ENCODE measurements at regions of chr12 and their contacts with region 1.

Region 1: DNA sequence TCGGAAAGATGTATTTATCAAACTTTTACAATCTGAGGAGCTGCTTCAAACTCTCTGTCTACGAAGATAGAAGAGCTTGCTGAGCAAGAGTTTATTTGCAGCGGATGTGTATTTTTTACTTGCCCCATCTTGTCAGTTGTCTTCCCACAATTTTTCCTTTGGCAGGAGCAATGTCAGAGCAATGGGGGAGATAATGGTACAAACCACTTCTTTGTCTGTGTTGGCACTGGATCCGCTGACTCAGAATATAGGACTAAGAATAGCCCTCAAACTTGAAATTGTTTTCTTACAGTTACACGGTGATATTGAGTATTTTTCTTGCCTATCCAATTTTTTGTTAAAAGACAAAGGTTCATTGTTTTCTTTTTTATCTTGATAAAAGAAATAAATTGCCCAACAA is 27.6 kb downstream of the HELB start:
- DNase-seq: no peak
- H3K4me3 ChIP-seq: no peak overlapping the region
- H3K27ac ChIP-seq: no peak overlapping the region
- H3K4me1 ChIP-seq: no peaks in the 10 kb centered on the region
- H3K27me3 ChIP-seq: no peaks in the 10 kb centered on the region
- CTCF ChIP-seq: no peak
- EP300 ChIP-seq: no peak
- POLR2A ChIP-seq: no peak

Region 2: DNA sequence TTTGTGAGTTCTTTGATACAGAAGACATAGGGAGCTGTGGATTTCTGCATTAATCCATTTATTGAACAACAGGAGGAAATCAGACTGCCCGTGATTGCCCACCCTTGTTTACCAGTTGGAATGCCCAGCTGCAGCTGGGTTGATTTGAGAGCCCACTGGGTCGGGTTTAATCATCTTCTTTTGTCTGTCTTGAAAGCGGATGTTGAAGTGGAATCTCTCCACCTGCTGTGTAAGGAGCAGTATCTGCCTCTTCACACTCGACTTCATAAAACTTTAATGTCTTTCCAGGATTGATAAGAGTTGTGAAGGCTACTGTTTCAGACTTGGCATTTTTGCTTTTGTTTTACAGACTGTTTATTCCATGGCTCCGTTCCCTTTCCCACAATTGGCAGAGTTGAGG is 1465.6 kb before region 1 on chr12:
- in situ Hi-C with region 1: no loop called
- intact Hi-C with region 1: loop called (anchors 5 kb)
- DNase-seq: no peak
- H3K4me3 ChIP-seq: no peak overlapping the region
- H3K27ac ChIP-seq: no peak overlapping the region
- H3K4me1 ChIP-seq: no peaks in the 10 kb centered on the region
- H3K27me3 ChIP-seq: no peaks in the 10 kb centered on the region
- CTCF ChIP-seq: no peak
- EP300 ChIP-seq: no peak
- POLR2A ChIP-seq: no peak

Region 3: DNA sequence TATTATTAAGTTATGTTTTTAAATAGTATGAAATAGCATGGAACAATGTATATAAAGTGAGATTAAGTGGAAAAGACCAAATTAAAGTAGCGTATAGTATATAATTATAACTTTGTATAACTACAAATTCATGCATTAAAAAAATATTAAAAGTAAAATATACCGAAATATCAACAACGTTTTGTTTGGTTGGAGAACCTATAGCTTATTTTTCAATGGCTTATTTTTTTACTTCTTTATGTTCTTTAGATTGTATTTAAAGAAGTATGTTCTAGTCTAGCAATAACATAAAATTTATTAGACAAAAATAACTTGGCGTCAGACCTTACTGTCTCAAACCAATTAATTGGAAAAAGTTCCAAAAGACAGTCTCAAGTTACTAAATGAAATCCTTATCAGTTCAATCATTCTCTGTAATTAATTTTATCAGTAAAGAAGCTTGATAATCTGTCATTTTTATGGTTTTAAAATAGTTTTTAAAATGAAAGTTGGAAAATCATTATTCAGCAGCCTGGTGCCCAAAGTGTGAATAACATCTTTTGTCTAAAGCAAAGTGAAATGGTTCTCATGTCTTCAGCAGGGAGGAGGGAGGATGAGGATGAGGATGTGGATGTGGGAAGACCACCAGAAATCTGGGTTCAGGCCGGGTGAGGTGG is 94.2 kb before region 1 on chr12:
- in situ Hi-C with region 1: no loop called
- intact Hi-C with region 1: no loop called
- DNase-seq: no peak
- H3K4me3 ChIP-seq: peak overlapping the region in 3 of 4 donors; percentile 48 to 60 (median 49)
- H3K27ac ChIP-seq: peak overlapping the region; percentile 53 to 69 (median 64)
- H3K4me1 ChIP-seq: peaks cover 0 to 7% (median 2%) of the 10 kb centered on the region in 4 donors
- H3K27me3 ChIP-seq: no peaks in the 10 kb centered on the region
- CTCF ChIP-seq: peak in 3 of 5 experiments; percentile 2 to 41 (median 11)
- EP300 ChIP-seq: no peak
- POLR2A ChIP-seq: no peak

Region 4: GRCh38 chr12:66398931-66399910 is 69.3 kb after region 1 on chr12:
- in situ Hi-C with region 1: no loop called
- intact Hi-C with region 1: no loop called
- DNase-seq: no peak
- H3K4me3 ChIP-seq: no peak overlapping the region
- H3K27ac ChIP-seq: no peak overlapping the region
- H3K4me1 ChIP-seq: peaks cover 0 to 7% (median 2%) of the 10 kb centered on the region in 4 donors
- H3K27me3 ChIP-seq: no peaks in the 10 kb centered on the region
- CTCF ChIP-seq: no peak
- EP300 ChIP-seq: no peak
- POLR2A ChIP-seq: no peak

Region 5: DNA sequence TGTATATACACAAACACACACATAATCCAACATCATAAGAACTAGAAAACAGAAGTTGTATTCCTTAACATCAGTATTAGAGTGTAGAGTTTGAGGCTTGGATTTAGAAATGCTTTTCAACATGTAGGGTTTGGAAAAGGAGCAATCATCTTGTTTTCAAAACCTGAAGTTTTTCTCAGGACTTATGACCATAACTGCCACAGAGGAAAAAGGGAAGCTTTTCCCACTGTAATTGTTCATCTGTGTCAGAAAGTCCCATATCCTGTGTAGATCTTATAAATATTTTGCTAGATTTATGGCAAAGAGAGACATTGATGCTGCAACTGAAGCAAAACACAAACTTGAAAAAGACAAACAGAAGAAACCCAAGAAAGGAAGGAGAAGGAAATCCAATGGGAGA is 233.3 kb after region 1 on chr12:
- in situ Hi-C with region 1: no loop called
- intact Hi-C with region 1: no loop called
- DNase-seq: no peak
- H3K4me3 ChIP-seq: no peak overlapping the region
- H3K27ac ChIP-seq: no peak overlapping the region
- H3K4me1 ChIP-seq: no peaks in the 10 kb centered on the region
- H3K27me3 ChIP-seq: no peaks in the 10 kb centered on the region
- CTCF ChIP-seq: no peak
- EP300 ChIP-seq: no peak
- POLR2A ChIP-seq: no peak